HEK293T (cell line): ENCODE measurements at regions of chr11 and their contacts with region 1.

Region 1: DNA sequence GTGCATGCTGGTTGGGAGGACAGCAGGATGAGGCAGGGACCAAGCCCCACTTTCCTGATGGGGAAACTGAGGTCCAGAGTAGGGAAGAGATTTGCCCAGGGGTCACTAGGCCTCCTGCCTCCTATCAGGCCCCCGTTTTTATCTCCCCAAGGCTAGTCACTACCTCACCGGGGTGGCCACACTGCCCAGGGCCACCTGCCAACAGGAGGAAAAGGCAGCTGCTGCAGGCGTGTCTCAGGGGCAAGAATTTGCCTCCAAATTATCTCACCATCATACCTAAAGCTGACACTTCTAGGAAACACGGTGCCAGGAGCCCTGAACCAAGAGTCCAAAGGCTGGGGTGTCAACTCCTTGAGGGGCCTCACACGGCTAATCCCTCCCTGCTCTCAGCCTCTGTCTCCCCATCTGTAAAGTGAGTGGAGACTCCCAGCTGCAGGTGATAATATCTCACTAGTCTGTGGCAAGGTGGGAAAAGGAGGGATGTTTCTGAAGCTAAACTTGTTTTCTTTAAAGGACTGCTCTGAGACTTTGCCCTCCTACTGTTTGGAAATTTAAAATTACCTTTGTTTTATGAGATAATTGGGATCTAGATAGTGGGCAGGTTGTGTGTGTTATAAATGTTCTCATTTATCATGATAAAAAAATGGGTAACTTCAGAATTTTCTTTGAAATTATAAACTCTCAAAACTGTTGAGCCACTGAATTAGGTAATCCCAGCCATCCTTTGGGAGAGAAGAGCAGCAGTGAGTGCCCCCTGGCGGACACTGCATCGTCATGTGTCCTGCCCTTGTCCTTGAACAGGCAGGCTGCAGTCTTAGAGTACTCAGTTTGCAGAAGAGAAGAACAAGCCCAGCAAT is 60.0 kb downstream of the MYO7A start:
- DNase-seq: peak; percentile 81

Region 2: GRCh38 chr11:77127232-77127911 is 60.6 kb before region 1 on chr11:
- CTCF ChIA-PET with region 1: interaction called, 24 read pairs
- POLR2A ChIA-PET with region 1: no interaction called
- DNase-seq: peak; percentile 77

Region 3: GRCh38 chr11:77198440-77198849 is 10.4 kb after region 1 on chr11:
- CTCF ChIA-PET with region 1: no interaction called
- POLR2A ChIA-PET with region 1: no interaction called
- DNase-seq: peak; percentile 68

Region 4: DNA sequence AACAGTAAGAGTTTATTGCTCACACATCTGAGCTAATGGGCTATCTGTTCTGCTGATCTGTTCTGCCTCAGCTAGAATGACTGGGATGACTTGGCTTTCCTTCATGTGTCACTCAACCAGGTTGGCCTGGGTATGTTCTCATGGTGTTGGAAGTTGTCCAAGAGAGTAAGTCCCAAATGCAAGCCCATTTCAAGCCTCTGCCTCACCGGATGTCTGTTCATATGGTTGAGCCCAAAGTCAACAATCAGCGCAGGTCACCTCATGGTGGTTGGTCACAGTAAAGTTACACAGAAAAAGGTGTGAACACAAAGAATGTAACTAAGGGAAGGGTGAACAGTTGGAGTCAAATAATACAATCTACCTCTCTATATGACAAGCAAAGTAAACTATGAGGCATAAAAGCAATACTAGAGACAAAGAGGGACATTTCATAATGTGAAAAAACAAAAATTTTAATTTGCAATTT is 111.6 kb after region 1 on chr11:
- CTCF ChIA-PET with region 1: no interaction called
- POLR2A ChIA-PET with region 1: no interaction called
- DNase-seq: no peak